A673 (cell line): ENCODE measurements at regions of chr10 and their contacts with region 1.

Region 1: GRCh38 chr10:38010119-38010903 is at the start of gene ZNF33A:
- DNase-seq: peak; percentile 92
- H3K4me3 ChIP-seq: peak within 1 kb of the TSS; percentile 65
- H3K27ac ChIP-seq: peak within 1 kb of the TSS; percentile 98
- H3K4me1 ChIP-seq: peaks cover 6% of the 10 kb centered on the region
- H3K27me3 ChIP-seq: no peaks in the 10 kb centered on the region
- CTCF ChIP-seq: no peak
- total RNA-seq, gene ZNF33A: 20.6 and 21.9 TPM in 2 replicates

Region 2: DNA sequence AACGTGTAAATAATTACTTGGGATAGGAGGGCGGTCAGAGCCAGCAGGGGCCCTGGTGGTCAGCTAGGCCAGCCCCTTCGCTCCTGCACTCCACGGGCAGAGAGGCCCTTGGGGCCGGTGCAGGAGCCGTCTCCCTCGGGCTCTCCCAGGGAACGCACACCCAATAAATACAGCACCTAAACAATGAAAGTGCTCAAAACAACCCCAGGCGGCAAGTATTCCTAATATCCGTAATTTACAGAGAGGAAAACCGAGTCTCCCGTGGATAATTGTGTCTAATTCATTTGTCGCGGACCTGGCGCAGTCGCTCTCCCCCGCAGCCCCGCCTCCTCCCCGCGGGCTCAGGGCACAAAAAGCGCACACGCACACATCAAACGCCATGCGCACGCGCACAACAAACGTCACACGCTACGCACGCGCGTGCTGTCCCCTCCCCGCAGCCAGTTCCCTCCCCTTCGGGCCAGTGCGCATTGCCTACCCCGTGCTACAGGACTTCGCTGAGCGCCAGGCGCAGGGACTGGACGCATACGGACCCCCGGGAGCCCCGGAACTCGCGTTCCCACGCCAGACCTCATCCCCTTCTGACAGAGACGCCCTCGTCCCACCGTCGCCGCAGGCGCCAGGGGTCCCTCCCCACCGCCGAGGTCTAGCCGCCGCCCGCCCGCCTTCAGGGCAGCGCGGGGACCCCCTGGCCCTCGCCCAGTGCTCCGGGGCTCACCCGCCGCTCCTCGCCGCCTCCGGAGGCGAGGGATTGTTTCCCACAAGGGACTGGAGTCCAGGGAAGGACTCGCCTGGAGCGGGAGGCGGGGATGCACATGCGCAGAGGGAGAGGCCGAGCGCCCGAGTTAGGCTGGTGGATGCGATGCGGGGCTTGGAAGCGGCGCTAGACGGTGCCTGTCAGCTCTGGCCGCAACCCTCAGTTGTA is 152.8 kb before region 1 on chr10 and contains the start of gene ZNF248:
- CTCF ChIA-PET with region 1: no interaction called
- POLR2A ChIA-PET with region 1: no interaction called
- intact Hi-C with region 1: loop called (anchors 5 kb)
- DNase-seq: peak; percentile 97
- H3K4me3 ChIP-seq: peak within 1 kb of the TSS; percentile 77
- H3K27ac ChIP-seq: peak within 1 kb of the TSS; percentile 98
- H3K4me1 ChIP-seq: peaks cover 13% of the 10 kb centered on the region
- H3K27me3 ChIP-seq: no peaks in the 10 kb centered on the region
- CTCF ChIP-seq: no peak
- total RNA-seq, gene ZNF248: 8.7 and 10.6 TPM in 2 replicates

Region 3: GRCh38 chr10:37976091-37976879 is 34.0 kb before region 1 on chr10 and contains the start of gene ZNF25:
- CTCF ChIA-PET with region 1: interaction called, 4 read pairs
- POLR2A ChIA-PET with region 1: no interaction called
- intact Hi-C with region 1: loop called (anchors 1 kb)
- DNase-seq: peak; percentile 98
- H3K4me3 ChIP-seq: peak within 1 kb of the TSS; percentile 79
- H3K27ac ChIP-seq: peak within 1 kb of the TSS; percentile 92
- H3K4me1 ChIP-seq: no peaks in the 10 kb centered on the region
- H3K27me3 ChIP-seq: no peaks in the 10 kb centered on the region
- CTCF ChIP-seq: peak; percentile 95
- total RNA-seq, gene ZNF25: 5.8 and 6.7 TPM in 2 replicates

Region 4: DNA sequence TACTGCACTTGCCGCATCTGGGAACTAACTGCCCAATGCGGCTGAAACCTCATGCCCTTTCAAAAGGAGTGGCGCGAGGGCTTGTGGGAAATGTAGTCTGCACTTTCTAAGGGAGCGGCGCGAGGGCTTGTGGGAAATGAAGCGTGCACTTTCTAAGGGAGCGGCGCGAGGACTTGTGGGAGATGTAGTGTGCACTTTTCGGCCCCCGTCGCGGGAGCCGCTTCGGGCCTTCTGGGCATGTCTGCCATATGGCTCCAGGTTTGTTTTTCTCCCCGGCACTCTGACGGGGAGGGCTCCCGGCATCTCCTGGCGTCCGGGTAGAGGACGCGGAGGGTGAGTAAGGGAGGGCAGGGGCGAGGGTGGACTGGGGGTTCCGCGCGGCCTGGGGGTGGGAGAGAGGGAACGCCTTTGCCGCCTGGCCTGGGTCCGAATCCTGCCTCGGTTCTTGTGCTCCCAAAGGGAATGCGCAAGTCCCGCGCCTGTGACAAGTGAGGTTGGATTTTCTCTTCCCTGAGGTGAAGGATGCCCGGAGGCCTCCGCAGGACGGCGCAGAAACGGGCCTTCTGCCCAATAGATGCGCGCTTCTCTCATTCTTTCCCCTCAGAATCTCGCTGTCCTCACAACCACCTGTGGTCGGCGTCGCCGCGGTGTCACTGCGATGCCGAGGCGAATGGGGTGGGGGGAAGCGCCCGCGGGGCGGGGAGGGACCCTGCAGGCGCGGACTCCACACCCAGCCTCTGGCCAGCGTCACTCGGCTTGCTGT is 84.0 kb after region 1 on chr10 and contains the start of gene ZNF37A:
- CTCF ChIA-PET with region 1: no interaction called
- POLR2A ChIA-PET with region 1: no interaction called
- intact Hi-C with region 1: loop called (anchors 2 kb)
- DNase-seq: peak; percentile 98
- H3K4me3 ChIP-seq: peak within 1 kb of the TSS; percentile 90
- H3K27ac ChIP-seq: peak within 1 kb of the TSS; percentile 86
- H3K4me1 ChIP-seq: no peaks in the 10 kb centered on the region
- H3K27me3 ChIP-seq: no peaks in the 10 kb centered on the region
- CTCF ChIP-seq: no peak
- total RNA-seq, gene ZNF37A: 19.0 and 20.4 TPM in 2 replicates